Sciatic nerve (tissue), 2 donors: ENCODE measurements at regions of chr19 and their contacts with region 1.

Region 1: GRCh38 chr19:51098365-51099069 is 9.7 kb downstream of the CTU1 start:
- DNase-seq: peak; percentile 79
- ATAC-seq: peak; percentile 77

Region 2: GRCh38 chr19:51020988-51021651 is 77.4 kb before region 1 on chr19:
- intact Hi-C with region 1: loop called (anchors 2 kb)
- DNase-seq: no peak
- ATAC-seq: peak; percentile 15